Heart right ventricle (tissue), 16 donors: ENCODE measurements at regions of chr5 and their contacts with region 1.

Region 1: GRCh38 chr5:179986328-179986727 is 78.6 kb upstream of the TBC1D9B start:
- DNase-seq: no peak
- ATAC-seq: peak in 7 of 8 donors; percentile 17 to 91 (median 81)
- H3K4me3 ChIP-seq: no peak overlapping the region
- H3K27ac ChIP-seq: no peak overlapping the region
- H3K4me1 ChIP-seq: no peaks in the 10 kb centered on the region
- H3K27me3 ChIP-seq: no peaks in the 10 kb centered on the region
- CTCF ChIP-seq: peak in 7 of 9 donors; percentile 13 to 57 (median 34)

Region 2: GRCh38 chr5:179963375-179963774 is 23.0 kb before region 1 on chr5:
- intact Hi-C with region 1: no loop called
- DNase-seq: no peak
- ATAC-seq: no peak
- H3K4me3 ChIP-seq: no peak overlapping the region
- H3K27ac ChIP-seq: no peak overlapping the region
- H3K4me1 ChIP-seq: no peaks in the 10 kb centered on the region
- H3K27me3 ChIP-seq: no peaks in the 10 kb centered on the region
- CTCF ChIP-seq: no peak

Region 3: GRCh38 chr5:180084688-180085561 is 98.6 kb after region 1 on chr5:
- intact Hi-C with region 1: loop called in 8 of 10 experiments (anchors 1 to 10 kb)
- DNase-seq: no peak
- ATAC-seq: peak in 1 of 8 donors; percentile 30
- H3K4me3 ChIP-seq: no peak overlapping the region
- H3K27ac ChIP-seq: no peak overlapping the region
- H3K4me1 ChIP-seq: peaks cover 0 to 11% (median 0%) of the 10 kb centered on the region in 9 donors
- H3K27me3 ChIP-seq: peaks cover 0 to 36% (median 11%) of the 10 kb centered on the region in 7 donors
- CTCF ChIP-seq: no peak

Region 4: DNA sequence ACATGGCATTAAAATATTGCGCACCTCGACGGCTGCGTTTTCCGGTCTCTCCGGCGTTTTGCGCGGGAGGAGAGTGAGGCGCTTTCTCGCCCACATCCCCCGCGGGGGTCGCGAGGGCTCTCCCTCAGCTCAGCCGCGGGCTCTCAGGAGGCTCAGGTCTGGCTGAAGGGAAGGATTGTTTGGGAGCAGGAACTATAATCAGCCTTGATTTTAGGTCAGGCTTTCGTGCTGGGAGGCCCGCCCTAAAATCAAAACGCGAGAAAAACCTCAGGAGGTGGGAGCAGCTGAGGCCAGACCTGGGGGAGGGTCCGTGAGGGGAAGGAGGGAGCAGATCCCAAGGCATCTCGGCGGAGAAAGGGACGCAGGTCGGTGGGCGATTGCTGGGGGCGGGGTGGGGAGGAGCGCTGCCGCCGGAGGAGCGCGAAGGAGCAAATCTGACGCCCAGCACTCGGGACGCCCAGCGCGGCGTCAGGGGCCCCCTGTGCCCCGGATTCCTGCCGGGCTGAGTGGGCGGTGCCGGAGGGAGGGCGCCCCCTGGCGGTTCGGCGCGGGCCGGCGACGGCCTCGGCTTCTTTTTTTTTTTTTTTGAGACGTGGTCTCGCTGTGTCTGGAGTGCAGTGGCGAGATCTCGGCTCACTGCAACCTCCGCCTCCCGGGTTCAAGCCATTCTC is 103.9 kb after region 1 on chr5:
- intact Hi-C with region 1: loop called in 8 of 10 experiments (anchors 1 to 10 kb)
- DNase-seq: peak; percentile 68 to 81
- ATAC-seq: peak; percentile 83 to 93 (median 91)
- H3K4me3 ChIP-seq: peak overlapping the region in 9 of 10 donors; percentile 47 to 65 (median 57)
- H3K27ac ChIP-seq: peak overlapping the region in 7 of 10 donors; percentile 52 to 80 (median 72)
- H3K4me1 ChIP-seq: peaks cover 0 to 30% (median 6%) of the 10 kb centered on the region in 9 donors
- H3K27me3 ChIP-seq: peaks cover 0 to 4% (median 0%) of the 10 kb centered on the region in 7 donors
- CTCF ChIP-seq: peak; percentile 86 to 96 (median 93)